ENCODE measurements at regions of chr10 and their contacts with region 1.

Region 1: GRCh38 chr10:123666318-123667236 is at the start of gene GPR26:
- DNase-seq: peak in 1 of 2 experiments; percentile 64
- H3K4me3 ChIP-seq: peak within 1 kb of the TSS; percentile 11 to 62 (median 30)
- H3K27ac ChIP-seq: no peak within 1 kb of the TSS
- H3K4me1 ChIP-seq: peaks cover 0 to 15% (median 4%) of the 10 kb centered on the region in 4 experiments; a peak in 4 of 7 replicates
- H3K27me3 ChIP-seq: peaks cover 20 to 45% (median 40%) of the 10 kb centered on the region in 4 experiments
- CTCF ChIP-seq: peak in 2 of 3 experiments; percentile 5 to 10; a peak in 1 of 4 replicates
- EP300 ChIP-seq: no peak
- POLR2A ChIP-seq: no peak
- RAD21 ChIP-seq: peak; percentile 13 to 32; a peak in 1 of 4 replicates
- total RNA-seq, gene GPR26: 0.09 and 0.10 TPM in 2 replicates

Region 2: GRCh38 chr10:123607386-123607785 is 59.2 kb before region 1 on chr10:
- CTCF ChIA-PET with region 1: interaction called, 22 read pairs
- POLR2A ChIA-PET with region 1: no interaction called
- DNase-seq: peak in 1 of 2 experiments; percentile 43
- H3K4me3 ChIP-seq: peak overlapping the region in 1 of 4 experiments; percentile 33; a peak in 2 of 8 replicates
- H3K27ac ChIP-seq: no peak overlapping the region; the same call in 1 of the 2 replicates
- H3K4me1 ChIP-seq: peaks cover 3 to 20% (median 10%) of the 10 kb centered on the region in 4 experiments; a peak in 5 of 7 replicates
- H3K27me3 ChIP-seq: no peaks in the 10 kb centered on the region
- CTCF ChIP-seq: no peak
- EP300 ChIP-seq: peak in 1 of 2 experiments; percentile 24; a peak in 1 of 3 replicates
- POLR2A ChIP-seq: no peak
- RAD21 ChIP-seq: peak in 1 of 2 experiments; percentile 7; a peak in 1 of 4 replicates

Region 3: GRCh38 chr10:123655751-123656150 is 10.8 kb before region 1 on chr10:
- CTCF ChIA-PET with region 1: interaction called, 21 read pairs
- POLR2A ChIA-PET with region 1: interaction called, 4 read pairs
- DNase-seq: peak in 1 of 2 experiments; percentile 71
- H3K4me3 ChIP-seq: no peak overlapping the region
- H3K27ac ChIP-seq: no peak overlapping the region
- H3K4me1 ChIP-seq: peaks cover 0 to 4% (median 3%) of the 10 kb centered on the region in 4 experiments; a peak in 5 of 7 replicates
- H3K27me3 ChIP-seq: no peaks in the 10 kb centered on the region; a peak in 1 of 7 replicates
- CTCF ChIP-seq: peak; percentile 63 to 81 (median 72)
- EP300 ChIP-seq: no peak
- POLR2A ChIP-seq: no peak
- RAD21 ChIP-seq: peak; percentile 83 to 92

Region 4: GRCh38 chr10:123698741-123699140 is 32.2 kb after region 1 on chr10:
- CTCF ChIA-PET with region 1: interaction called, 12 read pairs
- POLR2A ChIA-PET with region 1: no interaction called
- DNase-seq: no peak
- H3K4me3 ChIP-seq: no peak overlapping the region
- H3K27ac ChIP-seq: no peak overlapping the region
- H3K4me1 ChIP-seq: no peaks in the 10 kb centered on the region; a peak in 1 of 7 replicates
- H3K27me3 ChIP-seq: no peaks in the 10 kb centered on the region
- CTCF ChIP-seq: no peak
- EP300 ChIP-seq: no peak
- POLR2A ChIP-seq: no peak
- RAD21 ChIP-seq: no peak

Region 5: DNA sequence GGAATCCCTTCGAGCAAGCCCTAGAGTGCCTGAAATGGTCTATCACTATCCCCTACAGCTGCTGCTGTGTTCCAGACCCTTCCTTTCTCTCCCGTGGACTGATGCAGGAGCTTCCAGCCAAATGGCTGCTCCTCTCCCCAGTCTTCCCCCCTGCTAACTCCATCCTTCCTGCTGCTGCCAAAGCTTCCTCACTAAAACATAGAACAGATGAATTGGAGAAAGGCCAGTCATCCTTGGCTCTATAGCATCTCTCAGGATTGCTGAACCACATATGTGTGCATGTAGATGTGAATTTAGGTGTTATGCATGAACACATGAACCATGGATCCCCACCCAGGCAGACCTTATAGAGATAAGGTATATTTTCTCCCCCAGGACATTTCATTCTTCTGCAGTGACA is 60.3 kb after region 1 on chr10:
- CTCF ChIA-PET with region 1: no interaction called
- POLR2A ChIA-PET with region 1: no interaction called
- DNase-seq: no peak
- H3K4me3 ChIP-seq: no peak overlapping the region
- H3K27ac ChIP-seq: no peak overlapping the region
- H3K4me1 ChIP-seq: peaks cover 2 to 14% (median 5%) of the 10 kb centered on the region in 4 experiments; a peak in 3 of 7 replicates
- H3K27me3 ChIP-seq: no peaks in the 10 kb centered on the region; a peak in 1 of 7 replicates
- CTCF ChIP-seq: no peak
- EP300 ChIP-seq: no peak
- POLR2A ChIP-seq: no peak
- RAD21 ChIP-seq: no peak